Activated naive CD4-positive, alpha-beta T cell treated with anti-CD3 and anti-CD28 coated beads for 36 hours (primary cell): ENCODE measurements at regions of chr16 and their contacts with region 1.

Region 1: GRCh38 chr16:89860747-89861304 is 12.6 kb upstream of the TCF25 start:
- DNase-seq: peak; percentile 76
- H3K4me3 Mint-ChIP-seq: no peak overlapping the region
- H3K27ac Mint-ChIP-seq: no peak overlapping the region
- H3K4me1 Mint-ChIP-seq: peaks cover 28% of the 10 kb centered on the region
- H3K27me3 Mint-ChIP-seq: no peaks in the 10 kb centered on the region

Region 2: DNA sequence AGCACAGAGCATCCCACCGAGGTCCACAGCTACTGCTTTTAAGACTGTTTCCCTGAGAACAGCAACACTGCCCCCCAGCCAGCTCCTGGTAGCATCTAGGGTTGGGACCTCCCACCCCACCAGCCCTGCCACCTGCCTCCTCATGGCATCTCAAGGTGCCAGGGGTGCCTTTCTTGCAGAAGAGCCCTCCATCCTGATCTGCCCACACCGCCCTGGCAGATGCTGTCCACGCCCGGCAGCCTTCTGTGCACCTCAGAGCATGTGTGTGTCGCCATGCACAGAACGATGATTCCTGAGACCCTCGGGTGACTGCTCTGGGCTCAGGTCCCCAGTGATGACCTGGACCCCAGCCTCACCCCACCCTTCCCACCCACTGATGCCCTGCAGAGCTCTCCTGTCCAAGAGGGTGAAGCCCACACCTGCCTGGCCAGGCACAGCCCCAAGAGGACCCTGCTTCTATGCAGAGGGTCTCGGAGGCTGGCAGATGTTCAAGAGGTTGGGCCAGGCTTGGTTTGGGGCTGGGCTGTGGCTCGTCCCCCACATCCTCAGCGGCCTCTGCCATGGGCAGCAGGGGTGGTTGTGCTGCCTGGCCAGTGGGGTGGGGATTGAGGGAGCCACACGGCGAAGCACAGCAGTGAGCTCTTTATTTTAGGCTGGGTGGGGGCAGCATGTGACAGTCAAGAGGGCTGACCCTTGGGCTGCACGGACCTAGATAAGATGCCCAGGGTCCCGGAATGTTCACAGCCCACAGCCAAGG is 154.1 kb before region 1 on chr16:
- CTCF ChIA-PET with region 1: interaction called, 66 read pairs
- intact Hi-C with region 1: loop called (anchors 1 kb)
- DNase-seq: no peak
- H3K4me3 Mint-ChIP-seq: no peak overlapping the region
- H3K27ac Mint-ChIP-seq: no peak overlapping the region
- H3K4me1 Mint-ChIP-seq: peaks cover 16% of the 10 kb centered on the region
- H3K27me3 Mint-ChIP-seq: no peaks in the 10 kb centered on the region

Region 3: GRCh38 chr16:89720813-89721545 is 139.8 kb before region 1 on chr16 and contains the starts of genes VPS9D1 and ZNF276:
- CTCF ChIA-PET with region 1: interaction called, 4 read pairs
- intact Hi-C with region 1: loop called (anchors 5 kb)
- DNase-seq: peak; percentile 84
- H3K4me3 Mint-ChIP-seq: peak within 1 kb of the TSS; percentile 77
- H3K27ac Mint-ChIP-seq: peak within 1 kb of the TSS; percentile 85
- H3K4me1 Mint-ChIP-seq: peaks cover 43% of the 10 kb centered on the region
- H3K27me3 Mint-ChIP-seq: no peaks in the 10 kb centered on the region
- total RNA-seq, gene VPS9D1: 0.91 to 1.4 TPM
- total RNA-seq, gene ZNF276: 19.8 to 25.3 TPM

Region 4: GRCh38 chr16:89815639-89816348 is 45.0 kb before region 1 on chr16:
- CTCF ChIA-PET with region 1: interaction called, 6 read pairs
- intact Hi-C with region 1: loop called (anchors 1 kb)
- DNase-seq: no peak
- H3K4me3 Mint-ChIP-seq: peak overlapping the region; percentile 85
- H3K27ac Mint-ChIP-seq: peak overlapping the region; percentile 61
- H3K4me1 Mint-ChIP-seq: peaks cover 36% of the 10 kb centered on the region
- H3K27me3 Mint-ChIP-seq: no peaks in the 10 kb centered on the region

Region 5: GRCh38 chr16:89873972-89874689 is 13.3 kb after region 1 on chr16:
- CTCF ChIA-PET with region 1: interaction called, 10 read pairs
- intact Hi-C with region 1: no loop called
- DNase-seq: peak; percentile 95
- H3K4me3 Mint-ChIP-seq: peak overlapping the region; percentile 91
- H3K27ac Mint-ChIP-seq: peak overlapping the region; percentile 95
- H3K4me1 Mint-ChIP-seq: peaks cover 13% of the 10 kb centered on the region
- H3K27me3 Mint-ChIP-seq: no peaks in the 10 kb centered on the region

Region 6: DNA sequence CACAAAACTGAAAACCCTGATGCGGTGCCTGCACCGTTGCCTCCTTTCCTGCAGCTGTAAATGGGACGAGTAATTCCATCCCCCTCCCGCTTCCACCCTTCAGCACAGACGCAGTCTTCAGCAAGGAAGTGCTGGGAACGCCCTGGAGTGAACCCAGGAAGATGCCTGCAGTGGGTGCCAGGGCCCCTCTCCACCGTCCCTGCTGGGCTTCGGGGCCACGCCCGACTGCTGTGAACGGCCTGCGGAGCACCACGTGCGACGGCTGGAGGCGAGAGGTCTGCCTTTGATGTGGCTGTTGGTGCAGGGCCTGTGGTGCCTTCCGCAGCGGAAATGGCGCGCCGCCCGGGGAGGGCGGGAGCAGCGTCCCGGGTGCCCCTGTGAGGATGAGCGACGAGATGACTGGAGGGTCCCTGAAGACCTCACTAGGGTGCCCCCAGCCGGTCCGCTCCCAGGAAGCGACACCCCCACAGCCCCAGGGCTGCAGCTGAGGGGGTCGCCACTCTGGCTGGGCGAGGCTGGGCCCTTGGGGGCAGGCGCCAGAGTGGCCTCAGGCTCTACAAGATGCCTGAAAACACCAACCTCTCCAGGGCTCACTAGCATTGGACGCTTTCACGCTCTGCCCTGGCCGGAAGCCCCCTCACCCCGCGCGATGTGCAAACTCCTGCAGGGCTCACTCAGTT is 57.1 kb after region 1 on chr16:
- CTCF ChIA-PET with region 1: no interaction called
- intact Hi-C with region 1: no loop called
- DNase-seq: peak; percentile 84
- H3K4me3 Mint-ChIP-seq: peak overlapping the region; percentile 50
- H3K27ac Mint-ChIP-seq: no peak overlapping the region
- H3K4me1 Mint-ChIP-seq: peaks cover 36% of the 10 kb centered on the region
- H3K27me3 Mint-ChIP-seq: peaks cover 30% of the 10 kb centered on the region

Region 7: DNA sequence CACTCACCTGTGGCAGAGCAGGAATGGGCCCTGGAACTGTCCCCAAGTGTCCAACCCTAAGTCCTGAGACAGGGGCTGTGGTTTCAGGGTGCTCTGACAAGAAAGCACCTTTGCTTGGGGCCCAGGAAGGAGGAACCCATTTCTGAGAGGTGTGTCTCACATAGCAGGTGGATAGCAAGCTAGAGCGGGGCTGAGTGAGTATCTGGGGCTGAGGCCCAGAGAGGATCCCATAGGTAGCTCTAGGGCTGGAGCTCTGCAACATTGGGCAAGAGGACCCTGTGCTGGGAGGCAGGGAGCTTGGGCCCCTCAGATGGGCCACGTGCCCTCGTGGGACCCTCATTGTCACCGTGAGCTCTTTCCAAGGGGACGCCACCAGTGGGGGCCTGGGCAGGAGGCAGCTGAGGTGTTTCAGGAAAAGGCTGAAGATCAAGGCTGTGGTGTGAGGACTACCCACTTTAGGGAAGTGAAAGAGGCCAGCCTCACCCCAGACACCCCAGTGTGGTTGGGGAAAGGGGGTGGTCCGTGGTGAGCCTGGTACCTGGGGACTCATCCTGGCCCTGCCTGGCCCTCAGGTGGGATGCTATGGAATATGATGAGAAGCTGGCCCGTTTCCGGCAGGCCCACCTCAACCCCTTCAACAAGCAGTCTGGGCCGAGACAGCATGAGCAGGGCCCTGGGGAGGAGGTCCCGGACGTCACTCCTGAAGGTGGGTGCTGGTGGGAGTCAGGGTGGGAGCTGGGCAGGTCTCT is 93.0 kb after region 1 on chr16:
- CTCF ChIA-PET with region 1: no interaction called
- intact Hi-C with region 1: no loop called
- DNase-seq: no peak
- H3K4me3 Mint-ChIP-seq: no peak overlapping the region
- H3K27ac Mint-ChIP-seq: no peak overlapping the region
- H3K4me1 Mint-ChIP-seq: peaks cover 4% of the 10 kb centered on the region
- H3K27me3 Mint-ChIP-seq: no peaks in the 10 kb centered on the region